A673 (cell line): ENCODE measurements at regions of chr7 and their contacts with region 1.

Region 1: DNA sequence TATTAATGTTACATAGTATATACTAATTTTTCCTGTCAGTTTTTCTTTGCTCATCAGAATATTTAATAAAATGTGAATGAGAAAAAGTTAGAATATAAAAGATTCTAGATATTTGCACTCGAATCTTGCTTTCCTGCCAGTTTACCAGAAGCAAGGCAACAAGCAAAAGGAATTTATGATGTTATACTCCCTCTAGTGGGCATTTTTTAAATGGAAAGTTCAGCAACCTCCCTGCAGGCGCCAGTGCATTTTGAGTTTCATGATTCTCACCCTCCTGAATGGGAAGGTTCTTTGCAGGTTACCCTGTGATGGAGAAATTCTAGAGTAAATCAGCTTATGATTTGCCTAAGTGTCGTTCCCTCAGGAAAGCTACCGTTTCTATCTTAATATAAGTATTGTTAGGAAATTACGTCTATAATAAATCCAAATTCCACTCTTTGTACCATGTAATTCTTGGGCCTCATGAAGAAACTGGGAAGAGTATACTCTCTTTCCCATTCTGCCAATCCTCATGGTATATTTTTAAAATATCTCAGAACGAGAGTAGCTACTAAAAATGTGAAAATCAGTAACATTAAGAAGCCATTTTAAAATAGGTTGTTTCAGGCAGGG is 350.0 kb downstream of the CRPPA start:
- DNase-seq: peak; percentile 79
- H3K4me3 ChIP-seq: no peak overlapping the region
- H3K27ac ChIP-seq: no peak overlapping the region
- H3K4me1 ChIP-seq: peaks cover 6% of the 10 kb centered on the region
- H3K27me3 ChIP-seq: peaks cover 47% of the 10 kb centered on the region
- CTCF ChIP-seq: peak; percentile 77

Region 2: DNA sequence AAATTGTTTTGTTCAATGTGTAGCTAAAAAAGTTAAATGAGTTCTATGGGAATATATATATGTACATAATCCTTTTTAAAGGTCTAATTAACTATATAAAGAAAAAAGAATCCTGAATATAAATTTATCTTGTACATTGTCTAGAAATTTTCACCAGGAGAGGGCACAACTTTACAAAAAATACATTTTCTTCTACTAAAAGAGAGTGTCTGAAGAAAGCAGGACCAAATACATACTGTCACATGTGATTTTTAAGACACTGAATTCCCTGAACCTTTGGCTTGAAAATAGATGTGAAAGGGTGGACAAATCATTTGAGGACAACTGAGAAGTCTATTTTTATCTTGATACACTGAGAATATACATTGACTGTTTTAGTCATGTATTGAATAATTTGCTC is 1373.1 kb before region 1 on chr7:
- CTCF ChIA-PET with region 1: no interaction called
- POLR2A ChIA-PET with region 1: no interaction called
- intact Hi-C with region 1: loop called (anchors 5 kb)
- DNase-seq: peak; percentile 28
- H3K4me3 ChIP-seq: no peak overlapping the region
- H3K27ac ChIP-seq: no peak overlapping the region
- H3K4me1 ChIP-seq: peaks cover 8% of the 10 kb centered on the region
- H3K27me3 ChIP-seq: no peaks in the 10 kb centered on the region
- CTCF ChIP-seq: peak; percentile 45; the same call in 1 of the 2 replicates

Region 3: DNA sequence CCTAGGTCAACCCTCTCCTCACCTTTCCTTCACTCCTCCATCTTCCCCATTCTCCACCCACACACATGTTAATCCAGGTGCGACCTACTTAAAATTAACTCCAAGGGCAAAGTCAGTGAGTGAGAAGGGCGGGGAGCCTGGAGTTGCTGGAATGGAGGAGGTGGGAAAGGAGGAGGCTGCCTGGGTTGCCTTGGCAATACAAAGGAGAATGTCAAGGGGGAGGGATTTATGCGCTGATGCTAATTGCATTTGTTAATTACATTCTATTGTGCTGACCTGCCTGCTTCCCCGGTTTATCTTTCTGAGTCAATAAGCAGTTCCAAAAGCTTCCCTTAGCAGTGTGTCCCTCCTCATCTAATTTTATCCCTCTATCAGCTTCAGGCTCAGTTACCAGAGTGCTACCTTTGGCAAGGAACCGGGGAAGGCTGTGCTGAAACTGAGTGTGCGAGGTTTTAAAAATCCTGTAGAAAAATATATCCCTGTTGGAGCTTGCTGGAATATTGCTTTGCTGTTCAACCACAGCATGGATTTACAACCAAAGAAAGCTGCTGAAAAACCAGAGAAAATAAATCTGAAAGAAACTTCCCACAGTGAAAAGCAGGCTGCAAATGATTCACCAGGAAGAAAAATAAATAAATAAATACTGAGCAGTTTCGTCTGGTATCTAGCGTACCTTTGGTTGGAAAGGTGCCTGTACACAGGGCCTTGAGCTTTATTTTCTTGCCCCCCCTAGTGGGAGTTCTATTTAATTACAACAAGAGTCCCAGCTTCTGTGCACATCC is 1055.6 kb before region 1 on chr7:
- CTCF ChIA-PET with region 1: no interaction called
- POLR2A ChIA-PET with region 1: no interaction called
- intact Hi-C with region 1: loop called (anchors 10 kb)
- DNase-seq: peak; percentile 75
- H3K4me3 ChIP-seq: no peak overlapping the region
- H3K27ac ChIP-seq: no peak overlapping the region
- H3K4me1 ChIP-seq: no peaks in the 10 kb centered on the region
- H3K27me3 ChIP-seq: no peaks in the 10 kb centered on the region
- CTCF ChIP-seq: peak; percentile 74

Region 4: DNA sequence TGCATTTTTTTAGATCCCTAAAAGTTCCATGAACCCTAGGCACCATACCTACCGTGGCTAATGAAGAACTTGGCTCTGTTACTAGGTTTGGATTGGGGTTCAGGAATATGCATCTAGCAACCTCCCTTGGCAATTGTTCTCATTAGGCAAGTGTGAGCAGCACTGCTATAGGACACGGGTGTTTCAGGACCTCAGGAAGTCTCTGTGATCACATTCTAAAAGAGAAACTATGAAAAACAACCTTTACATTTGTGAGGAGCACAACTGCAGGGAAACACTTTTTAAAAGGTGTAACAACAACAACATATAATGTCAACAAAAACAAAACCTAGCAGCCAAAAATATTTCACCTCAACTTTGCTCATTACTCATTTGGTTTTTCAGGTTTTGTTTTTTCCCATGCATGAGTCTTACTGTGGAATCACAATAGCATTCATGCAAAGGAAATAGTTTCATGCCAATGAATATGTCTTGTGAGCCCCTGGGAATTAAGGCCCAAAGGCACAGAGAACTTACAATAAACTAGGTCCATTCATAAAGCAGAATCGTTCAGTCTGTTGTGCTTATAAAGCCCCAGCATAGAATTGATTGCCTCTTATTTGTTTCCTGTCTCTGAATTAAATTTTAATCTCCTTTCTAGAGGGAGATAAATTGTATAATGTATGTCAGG is 913.1 kb before region 1 on chr7:
- CTCF ChIA-PET with region 1: no interaction called
- POLR2A ChIA-PET with region 1: no interaction called
- intact Hi-C with region 1: no loop called
- DNase-seq: peak; percentile 77
- H3K4me3 ChIP-seq: no peak overlapping the region
- H3K27ac ChIP-seq: no peak overlapping the region
- H3K4me1 ChIP-seq: peaks cover 8% of the 10 kb centered on the region
- H3K27me3 ChIP-seq: no peaks in the 10 kb centered on the region
- CTCF ChIP-seq: no peak

Region 5: DNA sequence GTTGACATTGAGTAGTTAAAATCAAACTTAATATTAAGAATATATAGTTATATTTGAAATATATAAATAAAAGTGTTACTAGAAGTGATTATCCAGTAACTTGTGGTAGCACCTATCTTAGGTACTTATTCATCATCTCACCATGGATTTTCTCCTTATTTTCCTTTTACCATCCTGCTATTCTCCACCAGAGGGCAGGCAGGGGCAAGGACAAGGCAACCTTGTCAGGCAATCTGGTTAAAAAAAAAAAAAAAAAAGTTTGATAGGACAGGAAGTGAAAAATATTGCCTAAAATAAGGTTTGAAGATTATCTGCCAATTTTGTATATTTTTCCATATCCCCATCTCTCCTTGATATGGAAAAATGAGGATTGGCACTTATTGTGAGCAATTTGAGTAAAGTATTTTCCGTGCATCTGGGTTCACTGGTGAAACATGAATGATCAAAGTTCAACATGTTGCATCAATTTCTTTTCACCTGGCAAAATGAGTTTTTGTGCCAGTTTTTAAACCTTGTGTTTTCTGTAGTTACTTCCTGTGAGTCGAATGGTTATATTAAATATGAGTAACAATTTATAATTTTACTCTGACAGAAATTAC is 766.3 kb before region 1 on chr7:
- CTCF ChIA-PET with region 1: no interaction called
- POLR2A ChIA-PET with region 1: no interaction called
- intact Hi-C with region 1: loop called (anchors 1 kb)
- DNase-seq: peak; percentile 69
- H3K4me3 ChIP-seq: no peak overlapping the region
- H3K27ac ChIP-seq: no peak overlapping the region
- H3K4me1 ChIP-seq: peaks cover 6% of the 10 kb centered on the region
- H3K27me3 ChIP-seq: no peaks in the 10 kb centered on the region
- CTCF ChIP-seq: peak; percentile 77

Region 6: DNA sequence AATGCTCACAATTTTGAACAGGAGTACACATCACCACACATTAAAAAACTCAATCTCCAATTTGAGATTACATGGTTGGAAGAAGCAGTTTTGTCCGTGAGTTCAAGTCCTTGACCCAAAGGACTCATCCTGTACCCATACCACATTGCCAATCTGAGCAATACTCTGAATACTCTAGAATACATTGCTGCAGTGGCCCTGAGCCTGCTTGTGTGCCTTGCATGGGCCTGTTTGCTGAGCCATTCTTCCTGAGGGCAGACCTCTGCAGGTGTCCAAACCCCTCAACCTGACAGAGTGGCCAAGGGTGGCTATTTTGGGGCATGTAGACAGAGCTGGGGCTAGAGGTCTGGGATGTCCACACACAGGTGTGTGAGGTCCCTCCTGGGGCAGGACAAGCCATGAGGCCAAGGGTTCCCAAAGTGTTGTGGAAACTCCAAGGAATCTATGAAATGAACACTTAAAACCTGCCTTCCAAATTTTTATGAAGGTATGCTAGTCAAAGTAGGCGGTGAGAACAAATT is 525.0 kb before region 1 on chr7:
- CTCF ChIA-PET with region 1: no interaction called
- POLR2A ChIA-PET with region 1: no interaction called
- intact Hi-C with region 1: no loop called
- DNase-seq: no peak
- H3K4me3 ChIP-seq: no peak overlapping the region
- H3K27ac ChIP-seq: no peak overlapping the region
- H3K4me1 ChIP-seq: no peaks in the 10 kb centered on the region
- H3K27me3 ChIP-seq: peaks cover 2% of the 10 kb centered on the region
- CTCF ChIP-seq: no peak

Region 7: GRCh38 chr7:15720849-15721471 is 350.4 kb before region 1 on chr7:
- CTCF ChIA-PET with region 1: no interaction called
- POLR2A ChIA-PET with region 1: no interaction called
- intact Hi-C with region 1: loop called (anchors 5 kb)
- DNase-seq: peak; percentile 52
- H3K4me3 ChIP-seq: no peak overlapping the region
- H3K27ac ChIP-seq: no peak overlapping the region
- H3K4me1 ChIP-seq: no peaks in the 10 kb centered on the region
- H3K27me3 ChIP-seq: peaks cover 23% of the 10 kb centered on the region
- CTCF ChIP-seq: peak; percentile 88

Region 8: DNA sequence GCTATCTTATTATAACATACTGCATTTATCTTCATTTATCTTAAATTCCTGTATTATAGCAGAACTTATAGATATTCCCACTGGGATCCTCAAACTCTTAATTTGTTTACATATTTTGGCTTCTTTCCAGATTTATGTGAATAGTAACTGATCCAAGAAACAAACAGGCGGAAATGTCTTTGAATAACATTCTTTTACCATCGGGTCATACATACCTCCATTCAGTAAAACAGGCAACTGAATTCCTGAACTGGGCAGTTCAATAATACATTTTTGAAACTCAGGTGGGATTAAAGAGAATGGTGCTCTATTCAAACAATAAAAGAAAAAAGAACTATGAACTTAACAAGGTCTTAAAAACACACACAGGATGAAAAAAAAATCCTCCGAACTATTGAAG is 12.6 kb after region 1 on chr7:
- CTCF ChIA-PET with region 1: no interaction called
- POLR2A ChIA-PET with region 1: no interaction called
- intact Hi-C with region 1: no loop called
- DNase-seq: peak; percentile 69
- H3K4me3 ChIP-seq: no peak overlapping the region
- H3K27ac ChIP-seq: no peak overlapping the region
- H3K4me1 ChIP-seq: peaks cover 20% of the 10 kb centered on the region
- H3K27me3 ChIP-seq: peaks cover 17% of the 10 kb centered on the region
- CTCF ChIP-seq: no peak